ENCODE measurements at regions of chr1 and their contacts with region 1.

Region 1: DNA sequence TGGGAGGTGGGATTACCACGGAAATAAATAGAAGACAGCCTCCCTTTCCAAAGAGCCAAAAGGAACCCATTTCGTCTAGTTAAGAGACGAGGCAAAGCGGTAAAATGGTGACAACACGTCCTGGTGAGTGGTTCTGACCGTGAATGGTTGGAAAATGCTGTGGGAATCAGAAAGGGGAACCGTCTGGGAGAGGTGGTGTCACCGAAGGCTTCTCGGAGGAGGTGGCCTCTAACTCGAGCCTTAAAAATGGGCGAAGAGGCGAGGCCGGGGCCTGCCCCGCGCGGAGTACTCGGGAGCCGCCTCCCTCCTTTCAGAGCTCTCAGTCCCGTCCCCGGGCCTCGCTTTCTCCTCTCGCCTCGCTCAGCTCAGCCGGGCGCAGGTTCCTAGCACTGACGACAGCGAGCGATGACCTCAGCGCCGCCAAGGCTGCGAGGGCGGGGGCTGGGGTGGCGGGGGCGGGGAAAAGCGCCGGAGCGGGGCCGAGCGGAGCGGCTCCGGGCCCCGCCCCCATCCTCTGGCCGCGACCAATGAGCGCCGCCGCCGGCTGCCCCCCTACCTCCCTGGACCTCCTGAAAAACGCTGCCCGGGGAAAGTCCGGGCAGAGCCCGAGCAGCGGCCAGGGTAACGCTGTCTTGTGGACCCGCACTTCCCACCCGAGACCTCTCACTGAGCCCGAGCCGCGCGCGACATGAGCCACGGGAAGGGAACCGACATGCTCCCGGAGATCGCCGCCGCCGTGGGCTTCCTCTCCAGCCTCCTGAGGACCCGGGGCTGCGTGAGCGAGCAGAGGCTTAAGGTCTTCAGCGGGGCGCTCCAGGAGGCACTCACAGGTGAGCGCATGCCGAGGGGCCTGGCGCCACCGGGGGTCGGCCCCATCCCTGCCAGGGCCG is at the start of gene BTG2:
- DNase-seq: peak; percentile 96
- H3K4me3 Mint-ChIP-seq: peak within 1 kb of the TSS; percentile 71
- H3K27ac Mint-ChIP-seq: peak within 1 kb of the TSS; percentile 6
- H3K4me1 Mint-ChIP-seq: peaks cover 48% of the 10 kb centered on the region
- H3K27me3 Mint-ChIP-seq: no peaks in the 10 kb centered on the region
- CTCF ChIP-seq: no peak
- total RNA-seq, gene BTG2: 39.8 and 44.4 TPM in 2 replicates

Region 2: GRCh38 chr1:203280996-203281395 is 24.2 kb before region 1 on chr1:
- CTCF ChIA-PET with region 1: interaction called, 17 read pairs
- POLR2A ChIA-PET with region 1: interaction called, 73 read pairs
- intact Hi-C with region 1: no loop called
- DNase-seq: peak; percentile 79
- H3K4me3 Mint-ChIP-seq: no peak overlapping the region
- H3K27ac Mint-ChIP-seq: no peak overlapping the region
- H3K4me1 Mint-ChIP-seq: peaks cover 21% of the 10 kb centered on the region
- H3K27me3 Mint-ChIP-seq: no peaks in the 10 kb centered on the region
- CTCF ChIP-seq: peak; percentile 39

Region 3: DNA sequence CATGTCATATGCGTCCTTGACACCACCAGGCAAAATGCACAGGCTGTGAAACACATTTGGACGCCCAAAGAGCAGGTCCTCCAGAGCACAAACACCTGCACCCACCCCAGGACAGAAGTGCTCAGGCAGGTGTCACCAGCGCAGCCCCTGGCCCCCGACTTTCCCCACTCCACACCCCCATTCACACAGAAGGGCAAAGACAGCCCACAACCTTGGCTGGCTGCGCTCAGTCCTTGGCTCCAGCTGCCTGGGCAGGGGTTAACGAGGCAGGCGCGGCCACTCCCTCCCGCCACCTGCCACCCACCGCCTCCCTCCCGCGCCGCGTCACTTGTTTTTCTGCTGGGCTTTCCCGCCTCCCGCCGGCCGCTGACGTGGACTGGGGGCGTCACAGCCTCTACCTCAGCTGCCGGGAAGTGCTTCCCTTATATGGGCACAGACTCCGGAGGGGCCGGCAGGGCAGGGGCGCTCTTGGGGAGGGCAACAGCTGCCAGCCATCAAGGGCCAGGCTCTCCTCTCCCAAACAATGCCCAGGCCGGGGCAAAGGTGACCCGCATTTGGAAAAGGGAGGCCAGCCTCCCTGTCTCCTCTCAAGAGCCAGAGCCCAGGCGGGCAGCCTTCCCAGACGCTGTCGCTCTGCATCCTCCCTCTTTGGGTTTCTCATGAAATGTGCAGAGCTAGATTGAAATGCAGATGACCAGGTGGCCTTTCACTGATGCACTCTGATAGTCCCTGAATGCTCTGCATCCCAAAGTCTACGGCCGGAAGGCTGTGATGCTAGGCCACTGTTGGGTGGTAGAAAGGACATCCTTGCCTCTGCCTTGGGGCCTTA is 14.7 kb before region 1 on chr1:
- CTCF ChIA-PET with region 1: interaction called, 19 read pairs
- POLR2A ChIA-PET with region 1: interaction called, 53 read pairs
- intact Hi-C with region 1: no loop called
- DNase-seq: peak; percentile 47
- H3K4me3 Mint-ChIP-seq: no peak overlapping the region
- H3K27ac Mint-ChIP-seq: no peak overlapping the region
- H3K4me1 Mint-ChIP-seq: no peaks in the 10 kb centered on the region
- H3K27me3 Mint-ChIP-seq: no peaks in the 10 kb centered on the region
- CTCF ChIP-seq: no peak

Region 4: GRCh38 chr1:203320591-203321272 is 15.6 kb after region 1 on chr1:
- CTCF ChIA-PET with region 1: interaction called, 105 read pairs
- POLR2A ChIA-PET with region 1: interaction called, 238 read pairs
- intact Hi-C with region 1: no loop called
- DNase-seq: peak; percentile 51
- H3K4me3 Mint-ChIP-seq: no peak overlapping the region
- H3K27ac Mint-ChIP-seq: no peak overlapping the region
- H3K4me1 Mint-ChIP-seq: peaks cover 20% of the 10 kb centered on the region
- H3K27me3 Mint-ChIP-seq: peaks cover 49% of the 10 kb centered on the region
- CTCF ChIP-seq: no peak

Region 5: GRCh38 chr1:203326830-203327683 is 21.9 kb after region 1 on chr1:
- CTCF ChIA-PET with region 1: interaction called, 167 read pairs
- POLR2A ChIA-PET with region 1: interaction called, 238 read pairs
- intact Hi-C with region 1: loop called (anchors 2 kb)
- DNase-seq: peak; percentile 97
- H3K4me3 Mint-ChIP-seq: peak overlapping the region; percentile 71
- H3K27ac Mint-ChIP-seq: peak overlapping the region; percentile 57
- H3K4me1 Mint-ChIP-seq: peaks cover 32% of the 10 kb centered on the region
- H3K27me3 Mint-ChIP-seq: peaks cover 16% of the 10 kb centered on the region
- CTCF ChIP-seq: no peak

Region 6: GRCh38 chr1:203353486-203353885 is 48.3 kb after region 1 on chr1:
- CTCF ChIA-PET with region 1: no interaction called
- POLR2A ChIA-PET with region 1: no interaction called
- intact Hi-C with region 1: no loop called
- DNase-seq: no peak
- H3K4me3 Mint-ChIP-seq: no peak overlapping the region
- H3K27ac Mint-ChIP-seq: no peak overlapping the region
- H3K4me1 Mint-ChIP-seq: no peaks in the 10 kb centered on the region
- H3K27me3 Mint-ChIP-seq: peaks cover 93% of the 10 kb centered on the region
- CTCF ChIP-seq: no peak

Measured in MCF 10A (cell line).